WTC11 (cell line): ENCODE measurements at regions of chr14 and their contacts with region 1.

Region 1: GRCh38 chr14:21978184-21978998 is 304.8 kb upstream of the OR4E1 start:
- DNase-seq: peak; percentile 67
- ATAC-seq: peak; percentile 93
- H3K4me3 Mint-ChIP-seq: no peak overlapping the region
- H3K27ac Mint-ChIP-seq: no peak overlapping the region
- H3K4me1 Mint-ChIP-seq: no peaks in the 10 kb centered on the region
- H3K27me3 Mint-ChIP-seq: peaks cover 30% of the 10 kb centered on the region
- CTCF ChIP-seq: peak; percentile 87

Region 2: DNA sequence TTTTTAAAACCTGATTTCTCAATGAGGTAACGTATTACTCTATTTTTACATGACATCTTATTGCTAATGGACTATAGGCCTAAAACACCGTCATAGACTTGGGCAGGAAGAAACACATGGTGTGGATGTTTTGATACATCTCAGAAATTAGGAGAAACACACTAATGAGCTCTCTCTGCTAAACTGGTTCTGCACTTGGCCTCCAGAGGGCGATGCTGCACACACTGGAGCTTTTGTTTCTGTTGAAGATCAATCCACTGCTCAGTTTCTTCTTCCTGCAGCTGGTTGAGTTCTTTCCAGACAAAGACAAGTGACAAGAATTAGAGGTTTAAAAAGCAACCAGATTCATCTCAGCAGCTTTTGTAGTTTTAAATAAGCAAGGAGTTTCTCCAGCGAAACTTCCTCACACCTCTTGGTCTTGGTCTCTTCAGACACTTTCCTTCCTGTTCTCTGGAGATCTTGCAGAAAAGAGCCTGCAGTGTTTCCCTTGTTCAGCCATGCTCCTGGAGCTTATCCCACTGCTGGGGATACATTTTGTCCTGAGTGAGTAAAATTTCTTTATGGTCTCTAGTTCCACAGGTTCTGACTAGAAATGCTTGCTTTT is 126.2 kb before region 1 on chr14:
- CTCF ChIA-PET with region 1: interaction called, 18 read pairs
- POLR2A ChIA-PET with region 1: no interaction called
- DNase-seq: peak; percentile 77
- ATAC-seq: peak; percentile 83
- H3K4me3 Mint-ChIP-seq: no peak overlapping the region
- H3K27ac Mint-ChIP-seq: no peak overlapping the region
- H3K4me1 Mint-ChIP-seq: no peaks in the 10 kb centered on the region
- H3K27me3 Mint-ChIP-seq: peaks cover 20% of the 10 kb centered on the region
- CTCF ChIP-seq: peak; percentile 30

Region 3: DNA sequence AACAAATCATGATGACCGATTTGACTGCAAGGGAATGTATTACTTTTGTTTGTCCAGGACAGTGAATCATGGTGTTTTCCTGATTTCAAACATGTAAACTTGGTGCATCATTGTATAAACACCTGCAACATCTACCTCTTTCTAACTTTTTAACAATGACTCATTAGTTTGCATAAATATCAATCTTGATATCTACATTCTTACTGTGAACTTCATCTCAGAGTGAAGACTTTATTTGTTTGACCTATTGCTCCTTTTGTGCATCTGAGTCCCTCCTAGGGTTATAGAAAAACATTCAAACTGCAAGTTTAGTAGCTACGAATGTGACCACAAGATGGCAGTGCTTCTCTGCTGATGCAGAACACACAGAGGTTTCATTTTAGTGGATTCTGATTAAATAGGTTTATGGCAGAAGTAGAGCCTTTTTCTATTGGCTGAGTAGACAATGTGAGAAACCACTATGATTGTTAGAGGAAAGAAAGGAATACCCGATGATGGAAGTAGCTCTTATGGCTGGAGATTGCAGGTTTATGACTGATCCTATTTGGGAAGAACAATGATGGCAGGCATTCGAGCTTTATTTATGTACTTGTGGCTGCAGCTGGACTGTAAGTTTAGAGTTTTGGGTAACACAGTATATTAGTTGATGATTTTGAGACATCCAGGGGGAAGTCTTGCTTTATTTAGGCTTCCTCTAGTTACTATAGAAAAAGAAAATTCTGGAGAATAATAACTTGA is 60.5 kb before region 1 on chr14:
- CTCF ChIA-PET with region 1: interaction called, 23 read pairs
- POLR2A ChIA-PET with region 1: no interaction called
- DNase-seq: peak; percentile 31
- ATAC-seq: peak; percentile 66
- H3K4me3 Mint-ChIP-seq: no peak overlapping the region
- H3K27ac Mint-ChIP-seq: no peak overlapping the region
- H3K4me1 Mint-ChIP-seq: no peaks in the 10 kb centered on the region
- H3K27me3 Mint-ChIP-seq: peaks cover 10% of the 10 kb centered on the region
- CTCF ChIP-seq: peak; percentile 37; the same call in 1 of the 2 replicates

Region 4: DNA sequence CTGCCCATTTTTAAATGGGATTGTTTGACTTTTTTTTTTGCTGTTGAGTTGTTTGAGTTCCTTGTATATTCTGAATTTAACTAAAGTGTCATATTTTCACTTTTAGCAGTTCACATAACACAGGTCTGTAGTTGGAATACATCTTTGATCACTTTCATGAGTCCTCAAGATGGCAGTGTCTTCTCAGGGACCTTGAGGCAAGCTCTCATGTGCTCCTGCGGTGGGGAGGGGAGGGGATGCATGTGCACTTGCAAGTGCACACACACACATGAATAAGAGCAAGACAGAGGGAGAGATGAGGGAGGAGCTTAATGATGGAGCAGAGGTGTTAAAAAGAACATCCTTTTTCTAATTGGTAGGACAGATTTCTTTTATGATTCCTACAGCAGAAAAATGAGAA is 13.3 kb before region 1 on chr14:
- CTCF ChIA-PET with region 1: interaction called, 28 read pairs
- POLR2A ChIA-PET with region 1: no interaction called
- DNase-seq: no peak
- ATAC-seq: no peak
- H3K4me3 Mint-ChIP-seq: no peak overlapping the region
- H3K27ac Mint-ChIP-seq: no peak overlapping the region
- H3K4me1 Mint-ChIP-seq: no peaks in the 10 kb centered on the region
- H3K27me3 Mint-ChIP-seq: peaks cover 22% of the 10 kb centered on the region
- CTCF ChIP-seq: no peak

Region 5: GRCh38 chr14:22010545-22011252 is 32.3 kb after region 1 on chr14:
- CTCF ChIA-PET with region 1: interaction called, 11 read pairs
- POLR2A ChIA-PET with region 1: no interaction called
- DNase-seq: no peak
- ATAC-seq: no peak
- H3K4me3 Mint-ChIP-seq: no peak overlapping the region
- H3K27ac Mint-ChIP-seq: no peak overlapping the region
- H3K4me1 Mint-ChIP-seq: no peaks in the 10 kb centered on the region
- H3K27me3 Mint-ChIP-seq: peaks cover 16% of the 10 kb centered on the region
- CTCF ChIP-seq: no peak

Region 6: DNA sequence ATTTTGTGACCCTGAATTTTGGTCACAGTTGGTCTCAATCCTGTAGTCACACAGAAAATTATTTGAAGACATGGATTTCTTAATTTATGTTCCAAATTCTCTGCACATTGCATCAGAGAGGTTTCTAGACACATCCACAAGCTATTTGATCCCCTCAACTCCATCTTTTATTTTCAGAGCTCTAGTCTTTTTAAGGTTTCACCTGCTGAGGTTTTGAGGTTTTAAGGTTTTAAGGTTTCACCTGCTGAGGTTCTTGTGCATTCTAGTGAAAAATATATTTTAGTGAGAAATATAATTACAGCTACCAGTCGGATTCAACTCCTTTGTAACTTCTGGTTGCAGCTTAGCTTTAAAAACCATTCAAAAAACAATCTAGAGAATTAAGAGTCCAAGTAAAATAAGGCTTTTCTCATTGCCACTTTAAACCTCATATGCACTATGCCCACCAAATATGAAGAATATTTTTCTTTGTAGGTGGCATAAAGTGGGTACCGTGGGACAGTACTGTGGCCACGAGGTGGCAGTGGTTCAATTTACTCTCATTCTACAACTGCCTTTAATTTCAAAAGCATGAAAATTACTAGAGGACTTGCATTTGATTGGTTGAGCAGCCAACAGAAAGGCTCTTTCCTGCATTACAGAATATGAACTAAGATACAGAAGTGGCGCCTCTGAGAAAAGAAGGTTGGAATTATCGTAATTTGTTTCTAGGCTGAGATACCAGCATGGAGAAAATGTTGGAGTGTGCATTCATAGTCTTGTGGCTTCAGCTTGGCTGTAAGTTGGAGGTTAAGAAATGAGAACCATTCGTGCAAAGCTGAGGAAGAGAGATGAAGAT is 61.8 kb after region 1 on chr14:
- CTCF ChIA-PET with region 1: interaction called, 22 read pairs
- POLR2A ChIA-PET with region 1: no interaction called
- DNase-seq: no peak
- ATAC-seq: peak; percentile 41; the same call in 1 of the 2 replicates
- H3K4me3 Mint-ChIP-seq: no peak overlapping the region
- H3K27ac Mint-ChIP-seq: no peak overlapping the region
- H3K4me1 Mint-ChIP-seq: no peaks in the 10 kb centered on the region
- H3K27me3 Mint-ChIP-seq: no peaks in the 10 kb centered on the region; the same call in 1 of the 2 replicates
- CTCF ChIP-seq: no peak

Region 7: DNA sequence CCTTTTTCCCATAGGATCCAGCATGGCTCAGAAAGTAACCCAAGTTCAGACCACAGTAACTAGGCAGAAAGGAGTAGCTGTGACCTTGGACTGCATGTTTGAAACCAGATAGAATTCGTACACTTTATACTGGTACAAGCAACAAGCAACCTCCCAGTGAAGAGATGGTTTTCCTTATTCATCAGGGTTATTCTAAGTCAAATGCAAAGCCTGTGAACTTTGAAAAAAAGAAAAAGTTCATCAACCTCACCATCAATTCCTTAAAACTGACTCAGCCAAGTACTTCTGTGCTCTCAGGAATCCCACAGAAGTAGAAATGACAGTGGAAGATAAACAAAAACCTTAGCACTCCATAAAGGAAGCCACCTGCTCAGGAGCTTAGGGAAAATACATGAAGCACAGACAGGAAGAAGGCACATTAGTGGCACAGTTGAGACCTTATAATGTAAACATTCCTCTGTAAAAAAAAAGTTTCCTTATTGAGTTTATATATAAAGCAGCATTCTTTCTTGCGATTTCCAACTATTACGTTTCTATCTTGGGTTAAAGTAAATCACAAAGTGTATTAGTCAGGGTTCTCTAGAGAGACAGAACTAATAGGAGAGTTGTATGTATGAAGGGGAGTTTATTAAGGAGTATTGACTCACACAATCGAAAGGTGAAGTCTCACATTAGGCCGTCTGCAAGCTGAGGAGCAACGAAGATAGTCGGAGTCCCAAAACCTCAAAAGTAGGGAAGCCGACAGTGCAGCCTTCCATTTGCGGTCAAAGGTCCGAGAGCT is 212.2 kb after region 1 on chr14:
- CTCF ChIA-PET with region 1: no interaction called
- POLR2A ChIA-PET with region 1: no interaction called
- DNase-seq: no peak
- ATAC-seq: no peak
- H3K4me3 Mint-ChIP-seq: no peak overlapping the region
- H3K27ac Mint-ChIP-seq: no peak overlapping the region
- H3K4me1 Mint-ChIP-seq: no peaks in the 10 kb centered on the region
- H3K27me3 Mint-ChIP-seq: no peaks in the 10 kb centered on the region
- CTCF ChIP-seq: no peak

Region 8: GRCh38 chr14:22213120-22213519 is 234.7 kb after region 1 on chr14:
- CTCF ChIA-PET with region 1: no interaction called
- POLR2A ChIA-PET with region 1: no interaction called
- DNase-seq: no peak
- ATAC-seq: no peak
- H3K4me3 Mint-ChIP-seq: no peak overlapping the region
- H3K27ac Mint-ChIP-seq: no peak overlapping the region
- H3K4me1 Mint-ChIP-seq: no peaks in the 10 kb centered on the region
- H3K27me3 Mint-ChIP-seq: no peaks in the 10 kb centered on the region
- CTCF ChIP-seq: no peak